Activated T-helper 2 cell treated with anti-CD3 and anti-CD28 coated beads, Interferon-gamma antibody, Interleukin-2, Interleukin-4, amounts not matched to agents 10 μg/mL and 5 μg/mL and 100 μg/mL, durations not matched to agents 14 hours and 24 hours and 36 hours (primary cell): ENCODE measurements at regions of chrX and their contacts with region 1.

Region 1: GRCh38 chrX:23694606-23695005 is 27.3 kb downstream of the PRDX4 start:
- DNase-seq: no peak
- H3K4me3 Mint-ChIP-seq: no peak overlapping the region
- H3K27ac Mint-ChIP-seq: no peak overlapping the region
- H3K4me1 Mint-ChIP-seq: no peaks in the 10 kb centered on the region
- H3K27me3 Mint-ChIP-seq: no peaks in the 10 kb centered on the region

Region 2: DNA sequence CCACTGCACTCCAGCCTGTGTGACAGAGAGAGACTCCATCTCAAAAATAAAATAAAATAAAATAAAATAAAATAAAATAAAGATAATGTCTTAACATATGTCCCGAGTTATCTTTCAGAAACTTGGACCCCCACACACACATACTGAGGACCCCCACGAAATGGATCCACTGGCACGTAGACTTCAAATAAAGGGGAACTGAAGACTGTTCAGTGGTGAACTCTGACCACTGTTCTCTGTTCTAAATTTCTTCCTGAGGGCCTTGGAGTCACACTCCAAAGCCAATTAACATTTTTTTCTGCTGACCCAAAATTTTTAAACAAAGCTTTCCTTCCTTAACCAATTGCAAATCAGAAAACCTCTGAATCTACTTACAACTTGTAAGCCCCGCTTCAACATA is 70.8 kb before region 1 on chrX:
- intact Hi-C with region 1: no loop called
- DNase-seq: no peak
- H3K4me3 Mint-ChIP-seq: no peak overlapping the region
- H3K27ac Mint-ChIP-seq: no peak overlapping the region
- H3K4me1 Mint-ChIP-seq: no peaks in the 10 kb centered on the region
- H3K27me3 Mint-ChIP-seq: peaks cover 3% of the 10 kb centered on the region

Region 3: GRCh38 chrX:23901805-23902204 is 207.2 kb after region 1 on chrX:
- intact Hi-C with region 1: loop called (anchors 1 kb)
- DNase-seq: peak; percentile 22
- H3K4me3 Mint-ChIP-seq: no peak overlapping the region
- H3K27ac Mint-ChIP-seq: no peak overlapping the region
- H3K4me1 Mint-ChIP-seq: peaks cover 14% of the 10 kb centered on the region
- H3K27me3 Mint-ChIP-seq: no peaks in the 10 kb centered on the region